Activated CD4-positive, alpha-beta T cell treated with anti-CD3 and anti-CD28 coated beads, Interleukin-2, amount 10 ng/mL, durations not matched to agents 24 days and 14 days (primary cell): ENCODE measurements at regions of chr11 and their contacts with region 1.

Region 1: GRCh38 chr11:34997952-34998528 is 81.6 kb downstream of the PDHX start:
- DNase-seq: no peak
- H3K4me3 Mint-ChIP-seq: peak overlapping the region; percentile 6
- H3K27ac Mint-ChIP-seq: peak overlapping the region; percentile 5
- H3K4me1 Mint-ChIP-seq: peaks cover 17% of the 10 kb centered on the region
- H3K27me3 Mint-ChIP-seq: no peaks in the 10 kb centered on the region

Region 2: GRCh38 chr11:34874202-34874601 is 123.8 kb before region 1 on chr11:
- intact Hi-C with region 1: no loop called
- DNase-seq: no peak
- H3K4me3 Mint-ChIP-seq: no peak overlapping the region
- H3K27ac Mint-ChIP-seq: no peak overlapping the region
- H3K4me1 Mint-ChIP-seq: no peaks in the 10 kb centered on the region
- H3K27me3 Mint-ChIP-seq: no peaks in the 10 kb centered on the region

Region 3: DNA sequence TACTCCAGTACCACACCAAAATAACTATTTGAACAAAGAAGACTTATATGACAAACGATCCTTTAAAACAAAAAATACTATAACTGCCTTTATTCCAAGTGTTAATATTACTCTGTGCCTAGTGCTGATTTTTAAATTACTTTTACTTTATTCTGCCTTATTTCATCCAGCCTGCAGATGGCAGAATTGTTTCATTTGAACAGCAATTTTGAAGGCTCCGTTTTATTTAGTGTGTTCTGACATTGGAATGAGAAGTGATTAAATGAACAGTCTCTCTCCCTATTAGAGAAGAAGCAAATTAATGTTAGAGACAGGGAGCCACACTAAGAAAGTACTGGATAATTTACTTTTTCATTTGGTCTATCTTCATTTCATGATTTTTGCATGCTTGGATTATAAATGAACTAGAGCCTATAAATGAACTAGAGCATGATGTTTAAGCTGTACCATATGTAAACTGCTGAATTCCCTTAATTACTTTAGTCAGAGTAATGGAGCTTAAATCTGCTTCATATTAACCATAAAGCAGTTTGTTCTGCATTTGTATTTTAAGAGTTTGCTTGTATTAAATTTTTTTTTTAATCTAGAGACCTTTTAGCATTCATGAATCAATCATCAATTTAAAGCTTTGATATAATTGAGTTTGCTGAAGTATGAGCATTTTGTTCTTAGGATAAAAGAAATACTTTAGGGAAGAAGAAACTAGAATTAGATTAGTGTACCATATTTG is 71.8 kb before region 1 on chr11:
- intact Hi-C with region 1: loop called (anchors 2 kb)
- DNase-seq: peak; percentile 77
- H3K4me3 Mint-ChIP-seq: no peak overlapping the region
- H3K27ac Mint-ChIP-seq: no peak overlapping the region
- H3K4me1 Mint-ChIP-seq: peaks cover 11% of the 10 kb centered on the region
- H3K27me3 Mint-ChIP-seq: no peaks in the 10 kb centered on the region

Region 4: GRCh38 chr11:35040221-35040942 is 42.3 kb after region 1 on chr11:
- intact Hi-C with region 1: no loop called
- DNase-seq: peak; percentile 91
- H3K4me3 Mint-ChIP-seq: peak overlapping the region; percentile 77
- H3K27ac Mint-ChIP-seq: peak overlapping the region; percentile 94
- H3K4me1 Mint-ChIP-seq: peaks cover 52% of the 10 kb centered on the region
- H3K27me3 Mint-ChIP-seq: peaks cover 9% of the 10 kb centered on the region

Region 5: GRCh38 chr11:35058669-35059434 is 60.8 kb after region 1 on chr11:
- intact Hi-C with region 1: no loop called
- DNase-seq: no peak
- H3K4me3 Mint-ChIP-seq: no peak overlapping the region
- H3K27ac Mint-ChIP-seq: no peak overlapping the region
- H3K4me1 Mint-ChIP-seq: peaks cover 22% of the 10 kb centered on the region
- H3K27me3 Mint-ChIP-seq: no peaks in the 10 kb centered on the region

Region 6: DNA sequence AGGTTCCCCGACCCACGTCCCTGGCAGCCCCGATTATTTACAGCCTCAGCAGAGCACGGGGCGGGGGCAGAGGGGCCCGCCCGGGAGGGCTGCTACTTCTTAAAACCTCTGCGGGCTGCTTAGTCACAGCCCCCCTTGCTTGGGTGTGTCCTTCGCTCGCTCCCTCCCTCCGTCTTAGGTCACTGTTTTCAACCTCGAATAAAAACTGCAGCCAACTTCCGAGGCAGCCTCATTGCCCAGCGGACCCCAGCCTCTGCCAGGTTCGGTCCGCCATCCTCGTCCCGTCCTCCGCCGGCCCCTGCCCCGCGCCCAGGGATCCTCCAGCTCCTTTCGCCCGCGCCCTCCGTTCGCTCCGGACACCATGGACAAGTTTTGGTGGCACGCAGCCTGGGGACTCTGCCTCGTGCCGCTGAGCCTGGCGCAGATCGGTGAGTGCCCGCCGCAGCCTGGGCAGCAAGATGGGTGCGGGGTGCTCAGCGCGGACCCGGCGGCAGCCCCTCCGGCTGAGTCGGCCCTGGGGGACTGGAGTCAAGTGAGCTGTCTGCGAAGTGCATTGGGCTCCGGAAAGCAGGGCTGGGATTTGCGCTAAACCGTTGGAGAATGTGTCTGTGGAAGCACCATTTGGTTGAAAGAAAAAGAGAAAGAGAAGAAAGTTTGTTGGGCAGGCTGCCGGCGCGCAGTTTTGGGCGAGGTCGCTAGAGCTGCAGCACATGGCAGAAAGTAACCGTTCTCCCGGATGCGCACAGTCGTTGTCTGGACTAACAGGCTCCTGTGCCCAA is 141.1 kb after region 1 on chr11 and contains the start of gene CD44:
- intact Hi-C with region 1: loop called (anchors 1 kb)
- DNase-seq: peak; percentile 91
- H3K4me3 Mint-ChIP-seq: peak within 1 kb of the TSS; percentile 94
- H3K27ac Mint-ChIP-seq: peak within 1 kb of the TSS; percentile 97
- H3K4me1 Mint-ChIP-seq: peaks cover 49% of the 10 kb centered on the region
- H3K27me3 Mint-ChIP-seq: no peaks in the 10 kb centered on the region
- total RNA-seq, gene CD44: 488 and 489 TPM in 2 replicates

Region 7: GRCh38 chr11:35165423-35166368 is 167.7 kb after region 1 on chr11:
- intact Hi-C with region 1: loop called (anchors 5 kb)
- DNase-seq: peak; percentile 98
- H3K4me3 Mint-ChIP-seq: peak overlapping the region; percentile 78
- H3K27ac Mint-ChIP-seq: peak overlapping the region; percentile 99
- H3K4me1 Mint-ChIP-seq: peaks cover 93% of the 10 kb centered on the region
- H3K27me3 Mint-ChIP-seq: no peaks in the 10 kb centered on the region

Region 8: DNA sequence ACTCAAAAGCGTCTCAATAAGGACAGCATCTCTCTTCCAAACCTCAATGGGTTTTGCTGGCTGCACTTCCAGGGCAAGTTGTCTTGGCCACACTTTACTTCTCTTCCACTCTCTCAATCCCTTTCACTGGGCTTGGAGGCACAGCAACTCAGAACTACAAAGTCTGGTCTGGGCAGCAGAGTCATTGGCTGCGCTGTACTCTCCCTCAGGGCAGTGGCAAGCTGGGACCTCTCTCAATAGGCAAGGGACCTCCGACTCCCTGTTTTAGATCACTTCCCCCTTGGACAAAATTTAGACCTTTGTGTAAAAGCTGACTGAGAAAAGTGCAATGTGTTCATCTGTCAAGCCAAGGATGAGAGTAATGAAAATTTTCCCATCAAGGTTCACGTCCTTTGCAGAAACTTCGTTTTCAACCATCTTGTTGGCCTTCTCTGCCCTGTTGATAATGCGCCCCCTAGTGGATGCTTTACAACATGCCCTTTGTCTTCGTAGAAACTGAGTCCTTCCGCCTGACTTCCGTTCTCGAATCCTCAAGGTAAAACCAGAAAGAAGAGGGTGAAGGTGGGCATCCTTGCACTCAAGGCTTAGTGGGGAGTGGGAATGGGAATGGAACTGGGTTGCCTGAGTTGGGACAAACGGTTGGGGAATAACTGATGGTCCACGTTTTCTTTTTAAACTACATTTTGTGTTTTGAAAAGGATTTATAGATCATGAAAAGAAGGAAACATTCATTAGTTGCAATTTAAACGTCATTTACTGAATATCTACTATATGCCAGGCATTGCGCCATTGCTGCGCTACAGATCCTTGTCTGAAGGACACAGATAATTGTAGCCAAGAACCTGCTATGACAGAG is 240.0 kb after region 1 on chr11:
- intact Hi-C with region 1: loop called (anchors 1 kb)
- DNase-seq: peak; percentile 88
- H3K4me3 Mint-ChIP-seq: peak overlapping the region; percentile 33
- H3K27ac Mint-ChIP-seq: no peak overlapping the region
- H3K4me1 Mint-ChIP-seq: peaks cover 69% of the 10 kb centered on the region
- H3K27me3 Mint-ChIP-seq: peaks cover 7% of the 10 kb centered on the region

Region 9: DNA sequence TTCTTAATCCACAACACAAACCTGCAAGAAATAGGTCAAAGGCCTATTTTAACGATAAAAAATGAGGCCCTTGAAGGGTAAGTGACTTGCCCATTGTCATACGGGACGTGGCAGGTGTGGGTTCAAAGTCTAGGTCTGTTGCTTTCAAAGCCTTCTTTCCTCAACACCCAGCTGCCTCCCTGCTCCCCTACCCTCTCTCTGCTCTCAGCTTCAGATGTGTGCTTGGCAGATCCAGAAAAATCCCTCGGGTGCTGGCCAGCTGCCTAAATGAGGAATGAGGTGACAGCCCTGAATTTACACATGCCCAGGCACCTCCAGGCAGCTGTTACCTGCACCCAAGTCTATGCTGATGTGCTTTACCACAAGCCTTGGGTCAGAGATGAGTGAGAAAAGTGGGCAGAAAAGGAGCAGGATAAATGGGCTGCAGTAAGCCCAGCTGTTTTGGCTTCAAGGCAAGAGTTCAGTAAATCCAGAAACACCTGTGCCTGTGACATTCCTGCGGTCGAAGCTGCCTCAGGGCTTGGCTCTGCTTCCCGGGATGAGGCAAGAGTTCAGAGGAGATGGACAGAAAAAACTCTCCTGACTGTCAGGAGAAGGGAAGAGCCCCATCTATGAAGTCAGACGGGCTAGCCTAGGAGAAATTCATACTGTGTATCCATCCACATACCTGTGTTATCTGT is 895.9 kb after region 1 on chr11:
- intact Hi-C with region 1: no loop called
- DNase-seq: no peak
- H3K4me3 Mint-ChIP-seq: no peak overlapping the region
- H3K27ac Mint-ChIP-seq: no peak overlapping the region
- H3K4me1 Mint-ChIP-seq: no peaks in the 10 kb centered on the region
- H3K27me3 Mint-ChIP-seq: peaks cover 2% of the 10 kb centered on the region